IMR-90 (cell line): ENCODE measurements at regions of chr16 and their contacts with region 1.

Region 1: GRCh38 chr16:56700195-56700594 is 17.9 kb downstream of the MT1X start:
- DNase-seq: peak; percentile 16
- ATAC-seq: no peak
- H3K4me3 ChIP-seq: no peak overlapping the region
- H3K27ac ChIP-seq: no peak overlapping the region
- H3K4me1 ChIP-seq: no peaks in the 10 kb centered on the region
- H3K27me3 ChIP-seq: peaks cover 2% of the 10 kb centered on the region; the same call in 1 of the 2 replicates
- CTCF ChIP-seq: no peak
- POLR2A ChIP-seq: no peak
- RAD21 ChIP-seq: no peak

Region 2: DNA sequence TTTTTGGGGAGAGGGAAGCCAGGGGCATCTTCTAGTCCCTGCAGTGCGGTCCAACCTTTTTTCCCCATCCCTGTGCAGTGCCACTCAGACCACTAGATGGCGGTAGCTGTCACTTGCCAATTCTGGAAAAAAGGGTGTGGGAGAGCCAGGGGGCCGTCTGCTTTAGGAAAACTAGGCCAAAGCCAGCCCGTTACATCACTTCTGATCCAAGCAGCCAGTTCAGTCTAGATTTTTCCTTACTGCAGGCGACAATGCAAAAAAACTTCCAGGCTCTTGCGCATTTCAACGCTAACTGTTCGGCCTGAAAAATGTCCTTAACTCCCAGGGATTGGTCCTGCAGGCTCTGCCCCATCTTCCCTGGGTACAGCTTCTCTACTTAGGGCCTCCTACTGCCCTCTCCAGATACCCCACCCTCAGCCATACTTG is 755.8 kb before region 1 on chr16:
- CTCF ChIA-PET with region 1: no interaction called
- POLR2A ChIA-PET with region 1: no interaction called
- dilution Hi-C with region 1: no loop called
- in situ Hi-C with region 1: loop called (anchors 25 kb)
- intact Hi-C with region 1: loop called (anchors 5 kb)
- DNase-seq: peak; percentile 55
- ATAC-seq: peak; percentile 98
- H3K4me3 ChIP-seq: no peak overlapping the region
- H3K27ac ChIP-seq: no peak overlapping the region
- H3K4me1 ChIP-seq: no peaks in the 10 kb centered on the region
- H3K27me3 ChIP-seq: no peaks in the 10 kb centered on the region
- CTCF ChIP-seq: peak; percentile 88
- POLR2A ChIP-seq: no peak
- RAD21 ChIP-seq: peak; percentile 80

Region 3: DNA sequence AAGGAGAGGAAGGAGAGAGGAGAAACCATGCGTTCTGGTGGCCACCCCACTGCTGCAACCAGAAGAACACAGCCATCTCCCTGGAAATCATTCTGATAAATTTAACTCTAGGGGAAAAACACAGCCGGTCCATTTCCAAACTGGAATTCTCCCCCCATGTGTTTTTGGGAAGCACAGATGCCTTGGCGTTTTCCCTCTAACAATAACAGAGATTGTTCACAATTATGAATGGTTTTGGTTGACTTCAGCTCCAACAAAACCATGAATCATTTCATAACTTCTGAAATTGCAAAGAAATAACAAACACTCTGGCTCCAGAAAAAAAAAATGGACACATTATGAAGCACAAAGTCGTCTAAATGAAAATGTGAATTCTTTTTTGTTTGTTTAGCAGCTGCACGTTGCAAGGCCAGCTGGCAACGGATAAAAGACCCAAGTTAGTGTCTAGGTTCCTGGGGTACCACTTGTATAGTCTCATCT is 462.7 kb before region 1 on chr16:
- CTCF ChIA-PET with region 1: no interaction called
- POLR2A ChIA-PET with region 1: no interaction called
- dilution Hi-C with region 1: no loop called
- in situ Hi-C with region 1: no loop called
- intact Hi-C with region 1: no loop called
- DNase-seq: no peak
- ATAC-seq: no peak
- H3K4me3 ChIP-seq: no peak overlapping the region
- H3K27ac ChIP-seq: no peak overlapping the region
- H3K4me1 ChIP-seq: no peaks in the 10 kb centered on the region
- H3K27me3 ChIP-seq: peaks cover 6% of the 10 kb centered on the region
- CTCF ChIP-seq: no peak
- POLR2A ChIP-seq: no peak
- RAD21 ChIP-seq: no peak

Region 4: DNA sequence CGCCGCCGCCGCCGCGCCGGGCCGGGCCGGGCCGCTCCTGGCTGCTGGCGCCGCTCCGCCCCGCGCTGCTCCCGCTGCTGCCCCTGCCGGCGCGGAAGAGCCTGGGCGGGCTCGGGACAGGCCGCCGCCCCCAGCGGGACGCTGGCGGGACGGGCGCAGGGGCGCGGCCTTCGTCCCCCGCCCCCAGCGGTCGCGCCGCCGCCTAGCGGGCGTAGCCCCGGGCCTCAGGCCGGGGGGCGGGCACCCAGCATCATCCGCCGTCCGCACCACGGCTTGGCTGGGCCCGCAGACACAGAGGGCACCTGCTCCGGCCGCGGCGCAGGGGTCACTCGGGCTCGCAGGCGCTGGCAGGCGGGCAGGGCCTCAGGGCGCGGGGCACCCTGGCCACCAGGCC is 274.8 kb before region 1 on chr16 and contains the start of gene AMFR:
- CTCF ChIA-PET with region 1: no interaction called
- POLR2A ChIA-PET with region 1: interaction called, 20 read pairs
- dilution Hi-C with region 1: no loop called
- in situ Hi-C with region 1: no loop called
- intact Hi-C with region 1: no loop called
- DNase-seq: peak; percentile 80
- ATAC-seq: peak; percentile 96
- H3K4me3 ChIP-seq: peak within 1 kb of the TSS; percentile 93
- H3K27ac ChIP-seq: peak within 1 kb of the TSS; percentile 84
- H3K4me1 ChIP-seq: peaks cover 11% of the 10 kb centered on the region
- H3K27me3 ChIP-seq: no peaks in the 10 kb centered on the region
- CTCF ChIP-seq: peak; percentile 51
- POLR2A ChIP-seq: no peak; the same call in 1 of the 2 replicates
- RAD21 ChIP-seq: peak; percentile 22; the same call in 1 of the 2 replicates
- total RNA-seq, gene AMFR: 215 and 216 TPM in 2 replicates

Region 5: DNA sequence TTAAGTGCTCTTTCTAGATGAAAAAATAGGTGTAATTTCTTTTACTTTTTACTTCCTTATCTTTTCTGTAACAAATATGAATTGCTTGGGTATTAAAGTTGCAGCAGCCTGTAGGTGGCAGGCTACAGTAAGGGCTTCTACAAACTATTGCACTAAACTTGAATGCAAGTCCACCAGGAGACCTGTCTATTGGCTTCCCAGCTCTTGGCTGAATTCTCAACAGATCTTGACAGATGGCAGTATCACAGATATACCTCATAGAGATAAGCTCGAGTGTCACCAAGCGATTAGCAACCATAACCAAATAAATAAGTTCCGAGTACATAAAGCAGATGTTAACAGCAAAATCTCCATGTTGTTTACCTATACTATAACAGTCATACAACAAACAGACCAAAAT is 186.2 kb before region 1 on chr16:
- CTCF ChIA-PET with region 1: interaction called, 5 read pairs
- POLR2A ChIA-PET with region 1: no interaction called
- dilution Hi-C with region 1: no loop called
- in situ Hi-C with region 1: no loop called
- intact Hi-C with region 1: loop called (anchors 1 kb)
- DNase-seq: peak; percentile 74
- ATAC-seq: peak; percentile 89
- H3K4me3 ChIP-seq: no peak overlapping the region
- H3K27ac ChIP-seq: no peak overlapping the region
- H3K4me1 ChIP-seq: no peaks in the 10 kb centered on the region; the same call in 1 of the 2 replicates
- H3K27me3 ChIP-seq: no peaks in the 10 kb centered on the region
- CTCF ChIP-seq: peak; percentile 74
- POLR2A ChIP-seq: no peak
- RAD21 ChIP-seq: peak; percentile 76

Region 6: GRCh38 chr16:56600398-56600999 is 99.7 kb before region 1 on chr16:
- CTCF ChIA-PET with region 1: interaction called, 10 read pairs
- POLR2A ChIA-PET with region 1: no interaction called
- dilution Hi-C with region 1: no loop called
- in situ Hi-C with region 1: no loop called
- intact Hi-C with region 1: loop called (anchors 2 kb)
- DNase-seq: peak; percentile 66
- ATAC-seq: peak; percentile 93
- H3K4me3 ChIP-seq: no peak overlapping the region
- H3K27ac ChIP-seq: no peak overlapping the region
- H3K4me1 ChIP-seq: no peaks in the 10 kb centered on the region
- H3K27me3 ChIP-seq: no peaks in the 10 kb centered on the region; the same call in 1 of the 2 replicates
- CTCF ChIP-seq: peak; percentile 70
- POLR2A ChIP-seq: no peak
- RAD21 ChIP-seq: peak; percentile 63

Region 7: GRCh38 chr16:56789360-56789759 is 89.2 kb after region 1 on chr16:
- CTCF ChIA-PET with region 1: interaction called, 13 read pairs
- POLR2A ChIA-PET with region 1: no interaction called
- dilution Hi-C with region 1: no loop called
- in situ Hi-C with region 1: no loop called
- intact Hi-C with region 1: no loop called
- DNase-seq: peak; percentile 60
- ATAC-seq: peak; percentile 65; the same call in 1 of the 2 replicates
- H3K4me3 ChIP-seq: no peak overlapping the region
- H3K27ac ChIP-seq: no peak overlapping the region
- H3K4me1 ChIP-seq: peaks cover 9% of the 10 kb centered on the region
- H3K27me3 ChIP-seq: no peaks in the 10 kb centered on the region
- CTCF ChIP-seq: peak; percentile 60
- POLR2A ChIP-seq: no peak
- RAD21 ChIP-seq: peak; percentile 66